HAP-1 (cell line): ENCODE measurements at regions of chr7 and their contacts with region 1.

Region 1: GRCh38 chr7:38411404-38411803 is 138.0 kb upstream of the TARP start:
- DNase-seq: peak; percentile 22 to 34
- H3K4me3 ChIP-seq: no peak overlapping the region
- H3K4me1 ChIP-seq: no peaks in the 10 kb centered on the region
- H3K27me3 ChIP-seq: peaks cover 27% of the 10 kb centered on the region

Region 2: DNA sequence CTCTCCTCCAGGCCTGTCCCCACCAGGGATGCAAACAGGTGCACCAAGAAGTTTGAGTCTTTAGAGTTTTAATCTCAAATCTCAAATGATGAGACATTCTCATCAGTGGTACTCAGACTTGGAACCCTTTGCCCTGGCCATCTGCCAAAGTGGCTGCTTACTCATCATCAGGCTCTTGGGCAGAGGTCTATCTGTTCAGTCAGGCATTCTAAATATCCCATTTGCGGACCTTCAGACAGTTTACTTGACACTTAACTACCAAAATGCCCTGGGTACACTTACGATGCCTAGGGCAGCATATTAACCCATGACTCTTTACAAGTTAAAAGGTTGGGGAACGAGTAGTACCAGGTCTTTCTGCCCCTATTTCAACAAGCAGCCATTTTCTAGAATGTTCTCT is 1093.6 kb after region 1 on chr7:
- in situ Hi-C with region 1: loop called (anchors 25 kb)
- DNase-seq: no peak
- H3K4me3 ChIP-seq: no peak overlapping the region
- H3K4me1 ChIP-seq: peaks cover 8% of the 10 kb centered on the region
- H3K27me3 ChIP-seq: no peaks in the 10 kb centered on the region